Tibial artery (tissue), 4 donors: ENCODE measurements at regions of chr6 and their contacts with region 1.

Region 1: DNA sequence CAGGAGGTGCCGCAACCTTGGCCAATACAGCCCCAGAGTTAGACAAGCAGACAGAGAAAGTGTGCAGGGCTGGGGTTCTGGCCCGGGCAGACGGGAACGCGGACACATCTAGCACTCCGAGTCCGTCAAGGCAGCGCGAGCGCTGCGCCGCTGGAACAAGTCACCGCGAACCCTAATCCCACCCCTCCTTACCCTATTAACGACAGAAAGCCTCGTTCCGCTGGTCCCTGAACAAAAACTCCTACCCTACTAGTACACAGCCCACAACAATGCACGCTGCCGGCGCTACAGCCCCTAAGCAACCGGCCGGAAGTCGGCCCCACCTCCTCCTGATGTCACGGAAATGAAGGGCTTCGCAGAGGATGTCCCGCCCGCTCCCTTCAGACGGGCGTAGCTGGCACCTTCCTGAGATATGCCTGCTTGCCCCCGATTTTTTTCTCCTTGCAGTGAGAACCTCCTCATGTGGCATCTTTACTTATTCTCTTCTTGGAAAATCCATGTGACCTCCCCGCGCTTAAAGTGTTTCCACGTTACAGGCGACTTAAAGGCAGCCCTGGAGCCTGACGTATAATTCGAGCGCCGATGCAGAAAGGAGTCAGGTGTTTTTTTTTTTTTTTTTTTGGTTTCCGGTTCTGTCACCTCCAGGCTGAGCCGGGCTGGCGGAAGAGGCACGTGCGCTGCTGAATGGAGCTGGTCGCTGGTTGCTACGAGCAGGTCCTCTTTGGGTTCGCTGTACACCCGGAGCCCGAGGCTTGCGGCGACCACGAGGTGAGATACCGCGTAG is at the starts of genes C6orf52 and PAK1IP1:
- DNase-seq: peak; percentile 93 to 96
- H3K4me3 ChIP-seq: peak within 1 kb of the TSS; percentile 80 to 86
- H3K27ac ChIP-seq: peak within 1 kb of the TSS; percentile 91
- H3K4me1 ChIP-seq: peaks cover 0 to 29% (median 24%) of the 10 kb centered on the region in 4 donors
- H3K27me3 ChIP-seq: no peaks in the 10 kb centered on the region
- CTCF ChIP-seq: no peak

Region 2: GRCh38 chr6:10451828-10452509 is 242.5 kb before region 1 on chr6:
- intact Hi-C with region 1: no loop called
- DNase-seq: no peak
- H3K4me3 ChIP-seq: no peak overlapping the region
- H3K27ac ChIP-seq: no peak overlapping the region
- H3K4me1 ChIP-seq: no peaks in the 10 kb centered on the region
- H3K27me3 ChIP-seq: peaks cover 0 to 12% of the 10 kb centered on the region in 2 donors
- CTCF ChIP-seq: no peak

Region 3: DNA sequence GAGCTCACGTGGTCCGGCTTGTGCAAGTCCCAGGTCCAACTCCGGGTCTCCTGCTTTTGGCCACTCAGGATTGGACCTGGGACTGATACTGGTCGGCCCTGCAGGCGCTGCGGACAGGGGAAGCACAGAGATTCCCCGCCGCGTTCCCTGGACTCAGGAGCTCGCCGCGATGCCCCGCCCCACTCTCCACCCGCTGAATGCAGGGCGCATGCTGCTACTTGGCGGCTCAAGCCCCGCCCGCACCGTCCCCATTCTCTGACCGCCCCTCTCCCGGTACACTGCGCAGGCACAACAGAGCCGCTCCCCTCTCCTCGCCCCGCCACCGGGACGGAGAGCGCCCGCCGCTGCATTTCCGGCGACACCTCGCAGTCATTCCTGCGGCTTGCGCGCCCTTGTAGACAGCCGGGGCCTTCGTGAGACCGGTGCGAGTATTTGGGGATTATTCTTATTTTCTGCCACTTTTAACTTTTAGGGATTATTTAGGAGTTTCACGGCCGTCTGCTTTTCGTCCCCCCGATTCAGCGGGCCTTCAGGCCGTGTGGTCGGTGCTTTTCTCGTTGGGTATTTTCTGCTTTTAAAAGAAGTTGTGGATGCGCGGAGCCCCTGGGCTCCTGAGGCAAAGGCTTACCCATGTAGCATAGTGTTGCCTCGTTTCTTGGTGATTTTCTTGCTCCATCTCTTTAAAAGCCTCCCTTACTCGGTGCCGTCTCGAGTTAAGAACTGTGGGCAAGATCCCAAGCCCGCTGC is 28.5 kb after region 1 on chr6 and contains the start of gene TMEM14C:
- intact Hi-C with region 1: loop called (anchors 2 kb)
- DNase-seq: peak; percentile 100
- H3K4me3 ChIP-seq: peak within 1 kb of the TSS; percentile 71 to 73
- H3K27ac ChIP-seq: peak within 1 kb of the TSS; percentile 78 to 92
- H3K4me1 ChIP-seq: peaks cover 7 to 47% (median 27%) of the 10 kb centered on the region in 4 donors
- H3K27me3 ChIP-seq: no peaks in the 10 kb centered on the region
- CTCF ChIP-seq: no peak